Posterior cingulate gyrus (tissue), 11 donors: ENCODE measurements at regions of chr6 and their contacts with region 1.

Region 1: DNA sequence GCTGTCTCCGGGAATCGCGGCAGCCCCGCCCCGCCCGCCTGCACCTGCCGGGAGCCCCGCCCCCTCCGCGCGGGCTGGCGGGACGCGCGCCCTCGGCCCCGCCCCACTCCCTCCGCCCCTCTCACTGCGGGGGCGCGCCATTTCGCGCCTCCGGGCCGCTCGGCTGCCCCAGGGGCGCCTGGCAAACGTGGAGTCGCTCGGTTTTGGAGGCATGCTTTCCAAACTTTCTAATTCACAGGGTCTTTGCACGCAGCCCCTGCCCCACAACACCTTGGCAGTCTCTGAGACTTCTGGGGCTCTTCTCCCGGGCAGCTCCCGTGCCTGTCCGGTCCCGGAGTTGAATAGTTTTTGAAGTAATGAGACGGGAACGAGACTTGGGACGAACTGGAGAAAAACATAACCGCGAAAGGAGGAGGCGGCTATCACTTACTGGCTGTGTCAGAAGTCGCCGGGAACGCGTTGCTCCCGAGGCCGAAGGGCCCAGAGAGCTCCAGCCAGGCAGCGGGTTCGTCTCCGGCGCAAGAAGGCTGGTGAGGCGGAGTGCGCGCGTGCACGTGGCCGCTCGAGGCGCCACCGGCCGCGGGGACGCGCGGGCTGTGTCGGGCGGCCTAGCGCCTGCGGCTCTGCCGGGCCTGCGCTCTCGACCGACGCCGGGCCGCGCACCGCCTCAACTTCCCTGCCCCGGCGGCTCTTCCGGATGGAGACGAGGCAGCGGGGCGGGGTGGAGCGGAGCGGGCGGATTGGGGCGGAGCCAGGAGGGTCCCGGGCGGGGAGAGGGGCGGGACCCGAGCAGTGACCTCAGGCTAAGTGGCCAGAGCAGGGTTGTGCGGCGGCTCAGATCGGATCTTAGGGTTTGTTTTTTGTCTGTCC is at the start of gene MCM9:
- DNase-seq: peak; percentile 63 to 97 (median 76)

Region 2: GRCh38 chr6:118893807-118894424 is 40.8 kb before region 1 on chr6 and contains the start of gene ASF1A:
- intact Hi-C with region 1: loop called (anchors 1 kb)
- DNase-seq: peak; percentile 95 to 99 (median 96)